Left colon (tissue), 2 donors: ENCODE measurements at regions of chr1 and their contacts with region 1.

Region 1: GRCh38 chr1:167066333-167067122 is 23.6 kb downstream of the GPA33 start:
- DNase-seq: peak; percentile 59 to 84
- ATAC-seq: peak; percentile 64

Region 2: DNA sequence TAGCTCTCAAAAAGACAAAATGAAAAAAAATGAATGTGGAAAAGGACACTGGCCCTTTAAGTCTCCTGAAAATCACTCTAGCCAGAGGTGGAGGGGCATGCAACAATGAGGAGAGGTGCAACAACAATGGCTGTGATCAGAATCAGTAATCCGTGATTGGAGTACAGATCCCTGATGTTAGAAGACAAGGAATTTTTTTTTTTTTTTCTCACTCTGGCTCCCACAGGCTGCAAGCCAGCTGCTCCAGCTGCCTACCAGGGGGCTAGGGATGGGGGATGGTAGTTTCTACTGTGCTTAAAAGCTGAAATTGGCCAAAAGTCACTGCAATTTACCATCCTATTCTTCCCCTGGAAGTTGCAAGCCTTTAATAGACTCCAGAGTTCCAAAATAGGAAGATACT is 81.9 kb after region 1 on chr1:
- intact Hi-C with region 1: no loop called
- DNase-seq: no peak
- ATAC-seq: no peak

Region 3: GRCh38 chr1:167219646-167220536 is 153.4 kb after region 1 on chr1:
- intact Hi-C with region 1: loop called in 1 of 2 experiments (anchors 5 kb)
- DNase-seq: peak; percentile 94 to 95
- ATAC-seq: peak; percentile 64

Region 4: GRCh38 chr1:167263819-167264464 is 197.4 kb after region 1 on chr1:
- intact Hi-C with region 1: loop called in 1 of 2 experiments (anchors 10 kb)
- DNase-seq: no peak
- ATAC-seq: peak; percentile 49

Region 5: DNA sequence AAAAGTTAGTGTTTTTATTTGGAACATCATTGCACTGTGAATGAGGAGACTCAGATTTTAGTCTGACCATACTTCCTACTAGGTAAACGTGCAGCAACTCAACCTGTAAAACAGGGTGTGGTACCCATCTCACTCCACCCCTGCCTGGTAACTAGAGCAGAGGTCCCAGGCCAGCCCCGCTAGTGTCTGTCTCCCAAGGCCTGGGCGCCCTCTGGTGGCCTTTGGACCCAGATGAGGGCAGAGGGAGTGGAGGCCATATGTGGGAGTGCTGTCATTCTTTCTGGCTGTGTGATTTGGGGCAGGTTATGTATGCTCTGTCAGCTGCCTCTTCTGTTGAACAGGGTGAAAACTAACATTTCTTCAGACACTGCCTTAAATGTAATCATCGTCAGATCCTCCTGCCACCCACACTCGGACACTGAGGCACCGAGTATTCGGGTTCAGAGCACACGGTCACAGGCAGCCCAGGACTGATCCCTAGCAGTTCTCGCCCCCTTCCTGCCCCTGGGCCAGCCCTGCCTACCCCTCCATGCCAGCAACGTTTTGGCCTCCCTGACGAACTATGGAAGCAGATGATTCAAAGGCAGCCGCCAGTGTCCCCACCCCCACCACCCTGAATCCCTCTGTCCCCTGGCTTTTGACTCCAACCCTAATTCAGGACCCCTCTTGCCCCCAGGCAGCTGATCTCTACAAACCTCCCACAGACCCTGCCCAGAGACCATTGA is 375.8 kb after region 1 on chr1:
- intact Hi-C with region 1: loop called (anchors 5 to 10 kb)
- DNase-seq: peak; percentile 95 to 98
- ATAC-seq: peak; percentile 98

Region 6: GRCh38 chr1:167533851-167534300 is 467.3 kb after region 1 on chr1:
- intact Hi-C with region 1: loop called in 1 of 2 experiments (anchors 5 kb)
- DNase-seq: peak; percentile 34 to 67
- ATAC-seq: peak; percentile 91